CD4-positive, alpha-beta T cell (primary cell): ENCODE measurements at regions of chr5 and their contacts with region 1.

Region 1: DNA sequence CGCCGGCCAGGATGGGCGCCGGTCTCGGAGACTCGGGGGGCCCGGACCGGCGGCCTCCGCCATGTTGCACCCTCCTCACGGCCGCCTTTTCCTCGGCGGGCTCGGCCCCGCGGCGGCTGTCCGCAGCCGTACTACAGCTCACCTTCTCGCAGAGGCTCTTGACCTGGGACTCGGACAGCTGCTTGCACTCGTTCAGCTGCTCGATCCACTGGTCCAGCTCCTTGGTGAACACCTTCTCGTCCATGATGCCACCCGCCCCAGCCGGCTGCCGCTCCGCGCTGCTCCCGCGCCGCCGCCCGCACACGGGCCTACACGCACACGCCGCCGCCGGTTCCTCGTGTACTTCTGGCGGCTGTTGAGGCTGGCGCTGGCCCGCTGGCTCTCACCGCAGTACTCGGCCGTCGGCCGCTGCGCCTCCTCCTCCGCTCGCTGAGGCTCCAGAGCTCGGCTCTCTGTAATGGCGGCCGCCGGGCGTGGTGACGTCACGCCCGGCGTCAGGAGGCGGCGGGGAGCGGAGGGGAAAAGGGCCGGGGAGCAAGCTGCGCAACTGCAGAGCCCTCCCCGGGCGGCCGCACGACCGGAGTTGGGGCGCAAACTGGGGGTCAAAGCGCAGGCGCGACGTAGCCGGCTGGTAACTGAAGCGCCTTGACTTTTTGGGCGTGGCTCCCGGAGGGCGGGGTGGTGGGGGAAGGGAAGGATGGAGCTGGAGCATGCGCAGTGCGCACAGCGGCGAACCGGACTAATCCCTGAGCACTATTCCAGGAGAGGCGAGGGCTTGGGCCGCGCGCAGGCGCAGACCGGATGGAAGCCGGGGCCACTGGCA is at the start of gene PPP2CA:
- DNase-seq: peak; percentile 98 to 100 (median 99)
- ATAC-seq: peak; percentile 76
- H3K4me3 ChIP-seq: peak within 1 kb of the TSS; percentile 75
- H3K4me3 Mint-ChIP-seq: peak within 1 kb of the TSS; percentile 99
- H3K27ac ChIP-seq: peak within 1 kb of the TSS; percentile 100
- H3K27ac Mint-ChIP-seq: peak within 1 kb of the TSS; percentile 100
- H3K4me1 ChIP-seq: peaks cover 23% of the 10 kb centered on the region
- H3K4me1 Mint-ChIP-seq: peaks cover 65% of the 10 kb centered on the region
- H3K27me3 ChIP-seq: no peaks in the 10 kb centered on the region
- H3K27me3 Mint-ChIP-seq: no peaks in the 10 kb centered on the region
- CTCF ChIP-seq: no peak
- total RNA-seq, gene PPP2CA: 188 to 195 TPM

Region 2: DNA sequence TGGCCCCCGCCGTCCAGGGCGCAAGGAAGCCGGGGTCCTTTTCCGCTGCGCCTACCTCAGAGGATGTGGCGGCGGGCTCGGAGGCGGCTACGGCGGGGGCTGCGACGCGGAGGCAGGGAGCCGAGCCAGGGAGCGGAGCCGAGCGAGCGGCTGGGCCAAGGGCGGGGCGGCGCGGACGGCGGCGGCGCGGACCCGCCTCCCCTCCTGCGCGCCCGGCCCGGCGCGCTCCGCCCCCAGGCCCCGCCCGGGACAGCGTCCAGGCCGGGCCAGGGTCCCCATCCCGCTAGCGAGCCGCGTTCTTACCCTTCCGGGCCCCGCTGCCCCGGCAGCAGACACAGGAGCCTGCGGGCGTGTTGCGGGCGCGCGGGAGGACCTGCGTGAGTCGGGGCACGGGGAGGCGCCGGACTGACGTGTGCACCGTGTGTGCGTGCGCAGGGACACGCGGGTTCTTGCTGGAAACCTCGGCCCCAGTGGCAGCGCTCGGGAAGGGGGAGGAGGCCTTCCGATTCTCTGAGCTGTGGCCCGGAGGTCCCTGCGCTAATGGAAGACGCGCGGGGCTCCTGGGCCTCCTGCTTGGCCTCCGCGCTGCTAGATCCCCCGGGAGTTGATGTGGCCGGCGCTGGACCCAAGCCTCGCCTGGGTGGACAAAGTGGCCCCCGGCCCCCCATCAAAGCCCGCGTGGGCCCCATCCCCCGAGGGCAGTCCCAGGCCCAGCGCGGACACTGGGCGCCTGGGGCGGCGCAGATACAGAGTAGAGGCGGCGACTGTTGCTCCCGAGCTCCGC is 221.0 kb before region 1 on chr5 and contains the start of gene VDAC1:
- CTCF ChIA-PET with region 1: no interaction called
- POLR2A ChIA-PET with region 1: interaction called, 13 read pairs
- intact Hi-C with region 1: loop called in 1 of 2 experiments (anchors 5 kb)
- DNase-seq: peak; percentile 69 to 97 (median 80)
- ATAC-seq: peak; percentile 82
- H3K4me3 ChIP-seq: peak within 1 kb of the TSS; percentile 85
- H3K4me3 Mint-ChIP-seq: peak within 1 kb of the TSS; percentile 99
- H3K27ac ChIP-seq: peak within 1 kb of the TSS; percentile 77 to 91
- H3K27ac Mint-ChIP-seq: peak within 1 kb of the TSS; percentile 97
- H3K4me1 ChIP-seq: peaks cover 54% of the 10 kb centered on the region
- H3K4me1 Mint-ChIP-seq: peaks cover 48% of the 10 kb centered on the region
- H3K27me3 ChIP-seq: no peaks in the 10 kb centered on the region
- H3K27me3 Mint-ChIP-seq: no peaks in the 10 kb centered on the region
- CTCF ChIP-seq: no peak
- total RNA-seq, gene VDAC1: 46.8 to 50.9 TPM

Region 3: GRCh38 chr5:134236318-134236717 is 10.5 kb after region 1 on chr5:
- CTCF ChIA-PET with region 1: no interaction called
- POLR2A ChIA-PET with region 1: interaction called, 10 read pairs
- intact Hi-C with region 1: no loop called
- DNase-seq: no peak
- ATAC-seq: no peak
- H3K4me3 ChIP-seq: no peak overlapping the region
- H3K4me3 Mint-ChIP-seq: no peak overlapping the region
- H3K27ac ChIP-seq: no peak overlapping the region
- H3K27ac Mint-ChIP-seq: no peak overlapping the region
- H3K4me1 ChIP-seq: no peaks in the 10 kb centered on the region
- H3K4me1 Mint-ChIP-seq: no peaks in the 10 kb centered on the region
- H3K27me3 ChIP-seq: no peaks in the 10 kb centered on the region
- H3K27me3 Mint-ChIP-seq: peaks cover 4% of the 10 kb centered on the region
- CTCF ChIP-seq: no peak

Region 4: DNA sequence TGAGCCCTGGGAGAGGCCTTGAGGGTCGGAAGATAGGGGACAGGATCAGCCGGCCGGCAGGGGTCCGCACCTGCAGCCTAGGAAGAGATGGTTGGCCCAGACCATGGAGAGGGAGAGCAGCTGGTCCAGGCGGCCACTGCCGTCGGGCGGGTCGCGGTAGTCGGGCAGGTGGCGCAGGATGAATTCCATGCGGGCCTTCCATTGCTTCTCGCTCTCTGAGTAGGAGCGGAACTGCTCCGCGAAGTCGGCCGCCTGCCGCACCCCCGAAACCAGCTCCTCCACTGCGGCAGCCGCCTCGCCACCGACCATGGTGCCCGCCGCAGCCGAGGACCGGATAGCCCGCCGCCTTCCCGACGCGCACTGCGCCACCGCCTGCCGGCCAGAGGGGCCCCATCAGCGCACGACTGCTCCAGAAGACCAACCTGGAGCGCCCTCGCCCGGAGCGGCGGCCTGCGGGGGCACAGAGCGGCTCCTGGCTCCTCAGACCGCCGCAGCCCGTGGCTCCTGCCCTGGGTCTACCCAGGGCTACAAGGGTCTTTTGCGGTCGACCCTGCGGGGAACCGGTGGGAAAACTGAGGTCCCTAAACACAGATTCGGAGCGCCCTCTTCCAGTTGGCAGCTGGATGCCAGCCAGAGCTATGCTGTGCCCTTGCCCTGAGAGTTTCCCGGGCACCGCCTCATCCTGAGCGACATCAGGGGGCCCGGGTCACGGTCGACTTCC is 185.9 kb after region 1 on chr5 and contains the start of gene CDKN2AIPNL:
- CTCF ChIA-PET with region 1: no interaction called
- POLR2A ChIA-PET with region 1: interaction called, 11 read pairs
- intact Hi-C with region 1: loop called in 1 of 2 experiments (anchors 10 kb)
- DNase-seq: peak; percentile 84 to 94 (median 90)
- ATAC-seq: peak; percentile 99
- H3K4me3 ChIP-seq: peak within 1 kb of the TSS; percentile 81
- H3K4me3 Mint-ChIP-seq: peak within 1 kb of the TSS; percentile 87
- H3K27ac ChIP-seq: peak within 1 kb of the TSS; percentile 53 to 64
- H3K27ac Mint-ChIP-seq: peak within 1 kb of the TSS; percentile 81
- H3K4me1 ChIP-seq: peaks cover 25% of the 10 kb centered on the region
- H3K4me1 Mint-ChIP-seq: peaks cover 42% of the 10 kb centered on the region
- H3K27me3 ChIP-seq: no peaks in the 10 kb centered on the region
- H3K27me3 Mint-ChIP-seq: no peaks in the 10 kb centered on the region
- CTCF ChIP-seq: peak; percentile 79
- total RNA-seq, gene CDKN2AIPNL: 12.8 to 15.5 TPM

Region 5: DNA sequence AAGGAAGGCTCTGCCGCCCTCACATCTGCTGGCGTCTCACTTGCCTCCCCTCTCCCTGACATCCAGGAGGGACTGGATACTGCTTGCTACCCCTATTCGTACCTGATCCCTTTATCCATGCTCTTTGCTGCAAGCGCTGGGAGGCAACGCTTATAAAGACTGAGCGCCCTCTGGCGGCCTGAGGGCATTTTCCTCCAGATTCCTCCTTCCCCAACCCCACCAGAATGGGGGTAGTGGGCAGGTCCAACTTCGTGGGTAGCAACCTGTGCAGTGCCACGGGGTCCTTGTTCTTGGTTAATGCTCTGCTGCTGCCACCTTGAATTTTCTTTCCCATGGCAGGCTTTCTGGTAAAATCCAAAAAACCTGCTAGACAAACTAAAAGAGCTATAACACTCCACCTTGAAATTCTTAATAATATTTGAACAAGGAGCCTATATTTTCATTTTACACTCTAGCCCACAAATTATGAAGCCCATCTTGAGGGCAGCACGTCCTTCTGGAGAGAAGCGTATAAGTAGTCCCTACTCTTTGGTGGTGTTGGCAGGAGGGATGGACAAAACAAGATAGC is 352.1 kb after region 1 on chr5:
- CTCF ChIA-PET with region 1: no interaction called
- POLR2A ChIA-PET with region 1: no interaction called
- intact Hi-C with region 1: no loop called
- DNase-seq: peak; percentile 63 to 86 (median 72)
- ATAC-seq: peak; percentile 85
- H3K4me3 ChIP-seq: no peak overlapping the region
- H3K4me3 Mint-ChIP-seq: no peak overlapping the region
- H3K27ac ChIP-seq: no peak overlapping the region
- H3K27ac Mint-ChIP-seq: peak overlapping the region; percentile 82
- H3K4me1 ChIP-seq: peaks cover 9% of the 10 kb centered on the region
- H3K4me1 Mint-ChIP-seq: peaks cover 7% of the 10 kb centered on the region
- H3K27me3 ChIP-seq: no peaks in the 10 kb centered on the region
- H3K27me3 Mint-ChIP-seq: no peaks in the 10 kb centered on the region
- CTCF ChIP-seq: peak; percentile 91

Region 6: GRCh38 chr5:134738133-134738962 is 512.5 kb after region 1 on chr5 and contains the start of gene CAMLG:
- CTCF ChIA-PET with region 1: no interaction called
- POLR2A ChIA-PET with region 1: interaction called, 13 read pairs
- intact Hi-C with region 1: loop called in 1 of 2 experiments (anchors 5 kb)
- DNase-seq: peak; percentile 92 to 99 (median 96)
- ATAC-seq: peak; percentile 96
- H3K4me3 ChIP-seq: peak within 1 kb of the TSS; percentile 98
- H3K4me3 Mint-ChIP-seq: peak within 1 kb of the TSS; percentile 92
- H3K27ac ChIP-seq: peak within 1 kb of the TSS; percentile 77 to 93
- H3K27ac Mint-ChIP-seq: peak within 1 kb of the TSS; percentile 86
- H3K4me1 ChIP-seq: peaks cover 28% of the 10 kb centered on the region
- H3K4me1 Mint-ChIP-seq: peaks cover 34% of the 10 kb centered on the region
- H3K27me3 ChIP-seq: no peaks in the 10 kb centered on the region
- H3K27me3 Mint-ChIP-seq: no peaks in the 10 kb centered on the region
- CTCF ChIP-seq: peak; percentile 63
- total RNA-seq, gene CAMLG: 49.3 to 51.1 TPM